ENCODE measurements at regions of chr1 and their contacts with region 1.

Region 1: GRCh38 chr1:197869490-197870077 is 32.8 kb upstream of the C1orf53 start:
- DNase-seq: no peak
- H3K4me3 ChIP-seq: no peak overlapping the region
- H3K27ac ChIP-seq: no peak overlapping the region
- H3K4me1 ChIP-seq: no peaks in the 10 kb centered on the region
- H3K27me3 ChIP-seq: no peaks in the 10 kb centered on the region
- CTCF ChIP-seq: no peak

Region 2: DNA sequence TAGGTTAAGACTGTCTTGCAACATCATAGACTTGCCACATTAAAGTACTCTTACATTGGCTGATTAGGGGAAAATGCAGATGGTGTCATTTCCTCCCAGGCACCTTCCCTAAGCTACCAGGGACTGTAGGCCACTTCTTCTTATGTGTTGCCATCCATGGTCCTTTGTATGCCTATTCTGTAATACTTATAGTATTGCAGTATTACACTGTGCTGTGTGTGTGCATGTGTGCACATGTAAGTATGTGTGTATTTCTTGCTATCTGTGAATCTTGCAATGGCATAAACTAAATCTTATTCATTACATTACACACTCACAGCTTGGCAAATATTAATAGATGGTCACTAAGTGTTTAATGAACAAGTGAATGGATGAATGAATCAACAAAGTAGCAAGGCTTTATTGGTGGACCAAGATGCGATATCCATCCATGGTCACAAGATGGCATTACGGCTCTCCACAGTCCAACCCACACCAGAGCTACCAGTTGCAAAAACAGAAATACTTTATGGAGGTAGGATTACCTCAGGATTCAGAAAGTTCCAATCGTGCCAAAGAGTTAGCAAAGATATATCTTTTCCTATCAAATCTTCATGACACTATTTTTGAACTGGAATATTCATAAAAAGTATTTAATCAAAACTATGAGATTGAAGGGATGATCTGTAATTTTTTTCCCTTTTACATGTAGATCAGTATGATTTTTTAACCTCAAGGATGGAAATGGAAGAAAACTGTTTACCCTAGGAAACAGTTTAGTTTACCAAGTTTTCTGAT is 254.5 kb before region 1 on chr1:
- intact Hi-C with region 1: loop called (anchors 5 kb)
- DNase-seq: peak in 2 of 5 donors; percentile 22 to 41
- H3K4me3 ChIP-seq: no peak overlapping the region
- H3K27ac ChIP-seq: no peak overlapping the region
- H3K4me1 ChIP-seq: no peaks in the 10 kb centered on the region
- H3K27me3 ChIP-seq: no peaks in the 10 kb centered on the region
- CTCF ChIP-seq: peak; percentile 49

Measured in kidney (tissue), 22 donors.